K562 (cell line): ENCODE measurements at regions of chr11 and their contacts with region 1.

Region 1: DNA sequence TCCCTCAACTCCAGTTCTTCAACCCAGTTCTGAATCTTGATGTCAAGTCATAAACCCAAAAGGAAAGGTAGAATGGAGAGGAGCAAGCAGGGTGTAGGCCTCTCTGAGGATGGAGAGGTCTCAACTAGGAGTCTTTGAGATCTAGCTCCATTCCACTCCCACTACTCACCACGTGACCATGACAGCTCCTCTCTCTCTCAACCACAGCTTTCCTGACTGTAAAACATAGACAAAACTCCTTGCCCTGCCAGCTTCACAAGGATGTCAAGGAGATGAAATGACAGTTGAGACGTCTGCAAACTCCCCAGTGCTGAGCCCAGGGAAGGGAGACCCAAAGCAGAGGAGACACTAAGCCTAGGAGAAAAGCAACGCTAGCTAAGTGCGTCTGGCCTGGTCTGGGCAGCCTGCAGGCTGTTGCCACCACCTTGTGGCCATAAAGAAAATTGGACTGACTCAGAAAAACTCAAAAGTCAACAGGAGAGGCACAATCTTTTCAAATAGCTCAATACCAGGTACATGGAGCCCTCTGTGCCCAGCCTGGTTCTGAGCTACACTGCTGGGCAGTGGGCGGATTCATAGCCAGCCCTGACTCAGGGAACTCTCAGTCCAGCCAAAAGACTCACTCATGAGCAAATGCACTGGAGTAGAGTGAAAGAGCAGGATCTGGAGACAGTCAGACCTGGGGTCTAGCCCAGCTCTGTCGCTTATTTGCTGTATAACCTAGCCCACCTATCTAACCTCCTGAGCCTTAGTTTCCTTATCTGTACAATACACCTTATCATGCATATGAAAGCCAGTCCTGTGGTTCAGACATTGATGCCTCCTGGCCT is 3.4 kb downstream of the CLPB start:
- DNase-seq: peak; percentile 57 to 73 (median 62)
- ATAC-seq: peak; percentile 60
- H3K4me3 ChIP-seq: no peak overlapping the region
- H3K27ac ChIP-seq: no peak overlapping the region; the same call in 2 of the 3 replicates
- H3K4me1 ChIP-seq: peaks cover 8 to 17% of the 10 kb centered on the region in 2 experiments; a peak in 4 of 5 replicates
- H3K27me3 ChIP-seq: no peaks in the 10 kb centered on the region
- CTCF ChIP-seq: peak; percentile 90 to 93 (median 92)
- EP300 ChIP-seq: no peak
- POLR2A ChIP-seq: no peak
- RAD21 ChIP-seq: peak; percentile 76 to 91

Region 2: GRCh38 chr11:71580057-71581003 is 850.6 kb before region 1 on chr11:
- CTCF ChIA-PET with region 1: no interaction called
- POLR2A ChIA-PET with region 1: no interaction called
- in situ Hi-C with region 1: loop called (anchors 25 kb)
- intact Hi-C with region 1: no loop called
- DNase-seq: peak; percentile 62 to 72 (median 71)
- ATAC-seq: peak; percentile 95
- H3K4me3 ChIP-seq: no peak overlapping the region
- H3K27ac ChIP-seq: no peak overlapping the region
- H3K4me1 ChIP-seq: no peaks in the 10 kb centered on the region
- H3K27me3 ChIP-seq: peaks cover 15 to 44% of the 10 kb centered on the region in 2 experiments
- CTCF ChIP-seq: peak; percentile 82 to 85 (median 84)
- EP300 ChIP-seq: no peak
- POLR2A ChIP-seq: no peak
- RAD21 ChIP-seq: peak in 1 of 2 experiments; percentile 51; a peak in 2 of 4 replicates

Region 3: GRCh38 chr11:72024069-72024754 is 406.7 kb before region 1 on chr11:
- CTCF ChIA-PET with region 1: interaction called, 17 read pairs
- POLR2A ChIA-PET with region 1: no interaction called
- in situ Hi-C with region 1: loop called (anchors 5 kb)
- intact Hi-C with region 1: loop called (anchors 1 kb)
- DNase-seq: no peak
- ATAC-seq: no peak
- H3K4me3 ChIP-seq: no peak overlapping the region
- H3K27ac ChIP-seq: no peak overlapping the region; the same call in 2 of the 3 replicates
- H3K4me1 ChIP-seq: no peaks in the 10 kb centered on the region
- H3K27me3 ChIP-seq: no peaks in the 10 kb centered on the region
- CTCF ChIP-seq: no peak
- EP300 ChIP-seq: no peak
- POLR2A ChIP-seq: no peak
- RAD21 ChIP-seq: no peak

Region 4: GRCh38 chr11:72102946-72103753 is 327.8 kb before region 1 on chr11 and contains the start of gene LAMTOR1:
- CTCF ChIA-PET with region 1: no interaction called
- POLR2A ChIA-PET with region 1: interaction called, 5 read pairs
- in situ Hi-C with region 1: no loop called
- intact Hi-C with region 1: loop called (anchors 5 kb)
- DNase-seq: peak; percentile 96 to 100 (median 96)
- ATAC-seq: peak; percentile 96
- H3K4me3 ChIP-seq: peak within 1 kb of the TSS; percentile 77
- H3K27ac ChIP-seq: peak within 1 kb of the TSS; percentile 96
- H3K4me1 ChIP-seq: peaks cover 12 to 39% of the 10 kb centered on the region in 2 experiments
- H3K27me3 ChIP-seq: no peaks in the 10 kb centered on the region
- CTCF ChIP-seq: peak; percentile 49 to 71 (median 66)
- EP300 ChIP-seq: no peak; the same call in none of the 2 replicates
- POLR2A ChIP-seq: peak; percentile 91
- RAD21 ChIP-seq: peak in 1 of 2 experiments; percentile 32; a peak in 3 of 4 replicates
- polyA plus RNA-seq, gene LAMTOR1: 91.1 to 97.5 TPM

Region 5: GRCh38 chr11:72238040-72238450 is 192.9 kb before region 1 on chr11:
- CTCF ChIA-PET with region 1: no interaction called
- POLR2A ChIA-PET with region 1: interaction called, 5 read pairs
- in situ Hi-C with region 1: no loop called
- intact Hi-C with region 1: loop called (anchors 5 kb)
- DNase-seq: peak; percentile 64 to 84 (median 77)
- ATAC-seq: peak; percentile 94
- H3K4me3 ChIP-seq: no peak overlapping the region
- H3K27ac ChIP-seq: no peak overlapping the region
- H3K4me1 ChIP-seq: peaks cover 0 to 28% of the 10 kb centered on the region in 2 experiments; a peak in 2 of 5 replicates
- H3K27me3 ChIP-seq: no peaks in the 10 kb centered on the region
- CTCF ChIP-seq: peak; percentile 82 to 85 (median 83)
- EP300 ChIP-seq: no peak
- POLR2A ChIP-seq: no peak
- RAD21 ChIP-seq: peak; percentile 34 to 58

Region 6: DNA sequence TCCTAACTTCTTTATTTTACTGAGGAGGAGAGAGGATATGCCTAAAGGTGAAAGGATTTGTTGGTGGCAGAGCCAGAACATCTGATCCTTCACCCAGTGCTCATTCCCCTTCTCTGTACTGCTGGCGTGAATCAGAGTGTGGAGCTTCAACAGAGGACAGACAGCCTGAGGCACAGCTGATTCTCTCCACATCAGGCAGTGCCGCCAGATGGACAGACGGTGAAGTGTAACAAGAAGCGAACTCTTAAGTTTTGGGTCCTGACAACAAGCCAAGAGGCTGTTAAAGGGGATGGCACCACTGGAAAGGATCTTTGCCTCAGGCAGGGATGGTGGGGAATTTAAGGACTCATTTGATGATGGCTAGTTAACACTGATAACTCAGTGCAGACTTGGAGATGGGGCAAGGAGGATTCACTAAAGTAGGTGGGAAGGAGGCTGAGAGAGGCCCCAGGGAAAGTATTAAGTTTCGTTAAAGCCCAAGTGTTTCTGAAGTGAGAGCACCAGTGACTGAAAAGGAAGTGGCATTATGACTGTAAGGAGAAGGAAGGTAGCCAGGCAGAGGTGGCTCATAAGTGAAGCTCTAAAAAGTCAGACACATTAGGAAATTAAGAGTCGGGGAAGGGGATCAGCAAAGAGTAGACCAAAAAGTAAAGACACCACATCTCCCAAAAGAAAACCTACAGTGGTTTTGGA is 78.0 kb before region 1 on chr11:
- CTCF ChIA-PET with region 1: interaction called, 6 read pairs
- POLR2A ChIA-PET with region 1: no interaction called
- in situ Hi-C with region 1: no loop called
- intact Hi-C with region 1: loop called (anchors 5 kb)
- DNase-seq: peak in 3 of 4 experiments; percentile 8 to 44 (median 26)
- ATAC-seq: peak; percentile 58
- H3K4me3 ChIP-seq: no peak overlapping the region
- H3K27ac ChIP-seq: no peak overlapping the region
- H3K4me1 ChIP-seq: peaks cover 0 to 10% of the 10 kb centered on the region in 2 experiments; a peak in 3 of 5 replicates
- H3K27me3 ChIP-seq: no peaks in the 10 kb centered on the region
- CTCF ChIP-seq: peak; percentile 35 to 55 (median 44); a peak in 5 of 6 replicates
- EP300 ChIP-seq: no peak
- POLR2A ChIP-seq: no peak
- RAD21 ChIP-seq: peak in 1 of 2 experiments; percentile 70; a peak in 3 of 4 replicates

Region 7: DNA sequence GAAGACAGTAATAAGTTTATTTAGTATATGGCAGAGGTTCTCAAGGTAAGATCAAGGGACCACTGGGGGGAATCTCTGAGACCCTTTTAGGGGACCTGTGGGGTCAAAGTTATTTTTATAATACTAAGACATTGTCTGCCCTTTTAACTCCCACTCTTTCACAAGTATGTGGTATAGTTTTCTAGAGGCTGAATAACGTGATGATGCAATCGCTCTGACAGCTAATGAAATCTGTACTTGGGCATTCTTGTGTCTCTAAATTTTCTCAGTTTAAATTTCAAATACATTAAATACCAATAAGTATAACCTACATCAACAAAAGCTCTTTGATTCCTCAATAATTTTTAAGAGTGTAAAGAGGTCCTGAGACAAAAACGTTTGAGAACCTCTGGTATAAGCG is 531.1 kb after region 1 on chr11:
- CTCF ChIA-PET with region 1: no interaction called
- POLR2A ChIA-PET with region 1: no interaction called
- in situ Hi-C with region 1: no loop called
- intact Hi-C with region 1: no loop called
- DNase-seq: no peak
- ATAC-seq: peak; percentile 59
- H3K4me3 ChIP-seq: no peak overlapping the region
- H3K27ac ChIP-seq: no peak overlapping the region
- H3K4me1 ChIP-seq: no peaks in the 10 kb centered on the region; a peak in 1 of 5 replicates
- H3K27me3 ChIP-seq: no peaks in the 10 kb centered on the region
- CTCF ChIP-seq: no peak
- EP300 ChIP-seq: no peak; the same call in 1 of the 2 replicates
- POLR2A ChIP-seq: no peak
- RAD21 ChIP-seq: no peak